ENCODE measurements at regions of chr14 and their contacts with region 1.

Region 1: DNA sequence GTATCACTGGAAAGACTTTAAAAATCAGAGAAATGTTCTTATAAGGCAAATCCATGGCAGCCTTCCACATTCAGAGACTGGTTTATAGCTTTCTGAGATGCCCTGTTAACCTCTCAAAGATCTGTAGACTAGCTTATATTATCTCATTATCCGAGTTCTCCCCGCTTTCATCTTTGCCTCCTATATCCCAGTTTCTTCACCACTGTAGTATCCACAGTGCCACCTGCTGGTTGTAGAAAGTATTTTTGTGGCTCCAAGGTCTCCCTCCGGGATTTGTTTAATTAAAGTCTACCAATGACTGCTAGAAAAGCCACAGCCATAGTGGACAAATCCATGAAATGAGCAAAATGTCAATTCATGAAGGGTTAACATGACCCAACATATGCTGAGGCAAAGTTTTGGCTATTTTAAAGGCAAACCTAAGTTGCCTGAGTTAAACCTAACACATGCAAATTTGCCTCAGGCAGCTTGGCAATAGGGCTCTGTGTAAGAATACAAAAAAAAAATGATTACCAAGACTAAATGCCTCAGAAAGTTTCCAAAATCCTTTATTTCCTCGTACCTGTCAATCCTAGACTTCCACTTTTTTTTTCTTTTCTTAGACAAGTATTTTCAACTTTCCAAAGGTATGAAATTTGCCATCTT is 218.8 kb upstream of the BMP4 start:
- DNase-seq: peak; percentile 78
- ATAC-seq: peak; percentile 70
- H3K4me3 ChIP-seq: no peak overlapping the region
- H3K27ac ChIP-seq: peak overlapping the region; percentile 52
- H3K4me1 ChIP-seq: peaks cover 40 to 45% of the 10 kb centered on the region in 2 experiments
- H3K27me3 ChIP-seq: no peaks in the 10 kb centered on the region
- CTCF ChIP-seq: peak; percentile 66 to 84 (median 75); a peak in 5 of 6 replicates
- POLR2A ChIP-seq: no peak
- RAD21 ChIP-seq: peak; percentile 82

Region 2: DNA sequence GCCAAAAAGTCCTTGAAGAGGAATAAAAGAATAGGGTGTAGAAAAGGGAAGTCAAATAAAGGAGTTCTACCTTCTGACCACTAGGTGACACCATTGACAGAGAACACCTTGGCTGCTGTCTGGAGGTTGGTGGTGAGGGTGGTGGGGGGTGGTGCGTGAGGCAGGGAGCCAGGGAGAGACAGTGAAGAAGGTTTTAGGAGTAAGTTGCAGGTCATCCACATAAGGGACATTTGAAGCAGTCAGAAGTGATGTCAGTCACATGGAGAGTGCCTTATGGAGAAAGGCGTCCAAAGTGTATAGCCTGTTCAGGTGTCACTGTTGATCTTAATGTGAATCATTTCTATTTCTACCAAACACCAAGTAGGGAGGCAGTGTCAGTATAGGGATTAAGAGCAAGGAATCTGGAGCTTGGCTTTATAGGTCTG is 743.0 kb before region 1 on chr14:
- CTCF ChIA-PET with region 1: interaction called, 3 read pairs
- POLR2A ChIA-PET with region 1: no interaction called
- RAD21 ChIA-PET with region 1: no interaction called
- intact Hi-C with region 1: loop called (anchors 5 kb)
- DNase-seq: peak; percentile 40
- ATAC-seq: peak; percentile 99
- H3K4me3 ChIP-seq: no peak overlapping the region
- H3K27ac ChIP-seq: peak overlapping the region; percentile 33; the same call in 1 of the 2 replicates
- H3K4me1 ChIP-seq: peaks cover 9 to 24% of the 10 kb centered on the region in 2 experiments; a peak in 3 of 4 replicates
- H3K27me3 ChIP-seq: no peaks in the 10 kb centered on the region
- CTCF ChIP-seq: peak; percentile 43 to 84 (median 66); a peak in 5 of 6 replicates
- POLR2A ChIP-seq: no peak
- RAD21 ChIP-seq: peak; percentile 81

Region 3: DNA sequence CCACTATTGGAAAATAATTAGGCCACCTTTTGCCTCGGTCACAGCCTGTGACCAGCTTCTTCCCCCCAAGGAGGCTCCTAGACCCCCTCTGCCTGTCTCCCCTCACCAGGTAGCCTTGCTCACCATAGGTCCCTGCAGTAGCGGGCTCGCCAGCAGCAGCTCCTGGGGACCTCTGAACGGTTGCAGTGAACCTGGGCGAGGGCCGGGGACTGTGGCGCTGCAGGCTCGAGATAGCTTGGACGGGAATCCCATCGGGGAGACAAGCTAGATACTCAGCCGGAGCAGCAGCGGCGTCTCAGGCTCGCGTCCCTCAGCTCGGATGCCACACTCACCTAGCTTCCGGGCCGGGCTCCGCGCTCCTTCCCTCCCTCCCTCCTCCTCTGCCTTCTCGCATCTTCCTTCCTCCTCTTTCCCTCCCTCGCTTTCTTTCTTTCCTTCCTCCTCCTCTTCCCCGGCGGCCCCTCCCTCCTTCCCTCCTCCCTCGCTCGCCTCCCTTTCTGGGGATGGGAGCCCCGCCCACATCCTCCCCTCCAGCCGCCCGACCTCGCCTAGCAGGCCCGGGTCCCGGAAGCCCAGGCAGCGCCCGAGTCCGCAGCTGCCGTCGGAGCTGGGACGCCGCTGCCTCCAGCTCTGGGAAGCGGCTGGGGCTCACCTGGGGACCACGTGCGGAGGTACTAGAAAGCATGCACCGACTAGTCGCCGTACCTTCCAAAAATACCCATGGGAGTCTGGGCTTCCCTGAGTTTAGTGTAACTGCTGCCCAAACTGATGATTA is 218.8 kb before region 1 on chr14 and contains the start of gene BMP4:
- CTCF ChIA-PET with region 1: interaction called, 8 read pairs
- POLR2A ChIA-PET with region 1: interaction called, 9 read pairs
- RAD21 ChIA-PET with region 1: no interaction called
- intact Hi-C with region 1: loop called (anchors 2 kb)
- DNase-seq: peak; percentile 82
- ATAC-seq: peak; percentile 78
- H3K4me3 ChIP-seq: peak within 1 kb of the TSS; percentile 84 to 94
- H3K27ac ChIP-seq: peak within 1 kb of the TSS; percentile 98
- H3K4me1 ChIP-seq: peaks cover 24 to 39% of the 10 kb centered on the region in 2 experiments
- H3K27me3 ChIP-seq: no peaks in the 10 kb centered on the region
- CTCF ChIP-seq: no peak
- POLR2A ChIP-seq: peak; percentile 92
- RAD21 ChIP-seq: no peak; the same call in 1 of the 2 replicates
- total RNA-seq, gene BMP4: 145 TPM

Region 4: DNA sequence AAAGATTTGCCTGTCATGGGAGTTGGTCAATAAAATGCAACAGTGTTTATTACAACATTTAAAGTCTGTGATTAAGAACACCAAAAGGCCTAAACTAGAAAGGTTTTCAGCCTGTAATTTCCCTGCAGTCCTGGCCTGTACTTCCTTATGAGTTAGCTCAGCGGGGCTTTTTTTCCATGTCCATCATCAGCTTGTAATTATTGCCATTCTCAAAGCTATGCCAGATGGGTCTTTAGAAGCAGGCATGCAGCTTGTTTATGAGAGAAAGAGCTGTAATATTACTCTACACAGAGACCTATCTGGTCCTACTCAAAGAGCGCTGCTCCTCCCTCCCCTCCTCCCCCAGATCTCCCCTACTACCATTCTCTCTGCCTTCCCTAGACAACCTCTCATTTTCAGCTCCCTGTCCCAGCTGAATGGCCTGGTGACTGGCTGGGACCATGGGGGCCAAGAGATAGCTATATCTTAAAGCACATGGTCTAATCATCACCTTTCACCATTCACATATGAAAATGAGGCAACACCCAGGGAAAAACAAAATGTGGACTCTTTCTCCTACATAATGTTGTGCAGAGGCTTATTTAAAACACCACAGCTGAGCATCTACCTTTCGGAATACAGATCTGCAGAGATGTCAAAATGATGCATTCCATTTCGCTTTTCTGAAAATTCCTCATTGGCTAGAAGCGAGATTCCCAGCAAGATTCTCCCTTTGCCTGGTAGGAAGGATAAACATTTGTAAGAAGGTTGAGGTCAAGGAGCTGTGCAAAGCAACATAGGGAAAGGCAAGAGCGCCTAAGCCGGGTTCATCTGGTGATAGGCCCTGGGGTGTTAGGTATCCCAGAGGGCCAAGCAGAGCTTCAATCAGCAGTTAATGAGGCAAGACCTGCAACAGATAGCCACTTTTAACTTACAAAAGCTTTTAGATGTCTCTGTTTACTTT is 11.7 kb after region 1 on chr14:
- CTCF ChIA-PET with region 1: interaction called, 26 read pairs
- POLR2A ChIA-PET with region 1: interaction called, 5 read pairs
- RAD21 ChIA-PET with region 1: no interaction called
- intact Hi-C with region 1: no loop called
- DNase-seq: no peak
- ATAC-seq: no peak
- H3K4me3 ChIP-seq: no peak overlapping the region
- H3K27ac ChIP-seq: no peak overlapping the region
- H3K4me1 ChIP-seq: peaks cover 24 to 32% of the 10 kb centered on the region in 2 experiments
- H3K27me3 ChIP-seq: no peaks in the 10 kb centered on the region
- CTCF ChIP-seq: no peak
- POLR2A ChIP-seq: no peak
- RAD21 ChIP-seq: no peak

Region 5: DNA sequence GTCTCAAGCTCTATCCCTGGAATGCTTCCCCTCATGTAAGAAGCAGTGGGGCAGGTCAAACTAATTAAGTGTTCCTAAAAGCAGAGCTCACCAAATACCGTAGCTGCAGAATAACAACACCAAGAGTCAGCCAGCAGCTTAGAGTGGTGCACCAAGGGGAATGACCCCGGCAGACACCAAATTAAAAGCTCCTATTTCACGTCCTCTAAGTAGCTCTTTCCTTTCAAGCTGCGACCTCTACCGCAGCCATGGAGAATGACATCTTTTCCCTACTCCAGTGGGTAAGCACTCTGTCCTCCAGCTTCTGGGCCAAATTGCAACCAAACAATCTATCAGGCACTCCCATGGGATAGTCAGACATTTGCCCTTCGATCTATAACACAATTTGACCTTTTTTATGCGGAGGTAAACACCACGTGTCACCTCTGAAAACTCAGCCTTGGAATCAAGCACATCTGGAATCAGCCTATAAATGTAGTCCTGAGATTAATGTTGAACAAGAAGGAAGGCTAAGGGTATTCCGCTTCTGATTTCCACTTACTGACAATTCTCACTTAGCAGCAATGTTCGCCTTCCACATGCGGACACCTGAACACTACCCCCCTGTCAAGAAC is 153.8 kb after region 1 on chr14:
- CTCF ChIA-PET with region 1: interaction called, 17 read pairs
- POLR2A ChIA-PET with region 1: no interaction called
- RAD21 ChIA-PET with region 1: interaction called, 3 to 7 read pairs
- intact Hi-C with region 1: no loop called
- DNase-seq: peak; percentile 29
- ATAC-seq: peak; percentile 94
- H3K4me3 ChIP-seq: no peak overlapping the region
- H3K27ac ChIP-seq: 0 out of 2 replicates have a peak overlapping the region, but pooled peaks have one; percentile 8
- H3K4me1 ChIP-seq: peaks cover 0 to 8% of the 10 kb centered on the region in 2 experiments; a peak in 2 of 4 replicates
- H3K27me3 ChIP-seq: no peaks in the 10 kb centered on the region
- CTCF ChIP-seq: peak; percentile 40 to 60 (median 60); a peak in 5 of 6 replicates
- POLR2A ChIP-seq: no peak
- RAD21 ChIP-seq: peak; percentile 77

Region 6: GRCh38 chr14:54524410-54524809 is 349.0 kb after region 1 on chr14:
- CTCF ChIA-PET with region 1: no interaction called
- POLR2A ChIA-PET with region 1: no interaction called
- RAD21 ChIA-PET with region 1: no interaction called
- intact Hi-C with region 1: no loop called
- DNase-seq: no peak
- ATAC-seq: no peak
- H3K4me3 ChIP-seq: no peak overlapping the region
- H3K27ac ChIP-seq: no peak overlapping the region
- H3K4me1 ChIP-seq: no peaks in the 10 kb centered on the region
- H3K27me3 ChIP-seq: no peaks in the 10 kb centered on the region
- CTCF ChIP-seq: no peak
- POLR2A ChIP-seq: no peak
- RAD21 ChIP-seq: no peak

Region 7: GRCh38 chr14:55254581-55254980 is 1079.2 kb after region 1 on chr14:
- CTCF ChIA-PET with region 1: no interaction called
- POLR2A ChIA-PET with region 1: no interaction called
- RAD21 ChIA-PET with region 1: no interaction called
- intact Hi-C with region 1: no loop called
- DNase-seq: no peak
- ATAC-seq: no peak
- H3K4me3 ChIP-seq: no peak overlapping the region
- H3K27ac ChIP-seq: no peak overlapping the region
- H3K4me1 ChIP-seq: no peaks in the 10 kb centered on the region
- H3K27me3 ChIP-seq: peaks cover 7% of the 10 kb centered on the region
- CTCF ChIP-seq: no peak
- POLR2A ChIP-seq: no peak
- RAD21 ChIP-seq: no peak

Measured in HCT116 (cell line).